ENCODE measurements at regions of chr10 and their contacts with region 1.

Region 1: GRCh38 chr10:14954001-14954770 is at the start of gene DCLRE1C:
- DNase-seq: peak; percentile 94 to 95 (median 94)
- ATAC-seq: peak; percentile 98
- H3K4me3 ChIP-seq: peak within 1 kb of the TSS; percentile 74
- H3K27ac ChIP-seq: peak within 1 kb of the TSS; percentile 74
- H3K4me1 ChIP-seq: peaks cover 15 to 21% of the 10 kb centered on the region in 2 experiments; a peak in 4 of 5 replicates
- H3K27me3 ChIP-seq: no peaks in the 10 kb centered on the region
- CTCF ChIP-seq: no peak
- EP300 ChIP-seq: no peak
- POLR2A ChIP-seq: peak; percentile 97
- RAD21 ChIP-seq: no peak
- polyA plus RNA-seq, gene DCLRE1C: 15.6 to 22.0 TPM

Region 2: DNA sequence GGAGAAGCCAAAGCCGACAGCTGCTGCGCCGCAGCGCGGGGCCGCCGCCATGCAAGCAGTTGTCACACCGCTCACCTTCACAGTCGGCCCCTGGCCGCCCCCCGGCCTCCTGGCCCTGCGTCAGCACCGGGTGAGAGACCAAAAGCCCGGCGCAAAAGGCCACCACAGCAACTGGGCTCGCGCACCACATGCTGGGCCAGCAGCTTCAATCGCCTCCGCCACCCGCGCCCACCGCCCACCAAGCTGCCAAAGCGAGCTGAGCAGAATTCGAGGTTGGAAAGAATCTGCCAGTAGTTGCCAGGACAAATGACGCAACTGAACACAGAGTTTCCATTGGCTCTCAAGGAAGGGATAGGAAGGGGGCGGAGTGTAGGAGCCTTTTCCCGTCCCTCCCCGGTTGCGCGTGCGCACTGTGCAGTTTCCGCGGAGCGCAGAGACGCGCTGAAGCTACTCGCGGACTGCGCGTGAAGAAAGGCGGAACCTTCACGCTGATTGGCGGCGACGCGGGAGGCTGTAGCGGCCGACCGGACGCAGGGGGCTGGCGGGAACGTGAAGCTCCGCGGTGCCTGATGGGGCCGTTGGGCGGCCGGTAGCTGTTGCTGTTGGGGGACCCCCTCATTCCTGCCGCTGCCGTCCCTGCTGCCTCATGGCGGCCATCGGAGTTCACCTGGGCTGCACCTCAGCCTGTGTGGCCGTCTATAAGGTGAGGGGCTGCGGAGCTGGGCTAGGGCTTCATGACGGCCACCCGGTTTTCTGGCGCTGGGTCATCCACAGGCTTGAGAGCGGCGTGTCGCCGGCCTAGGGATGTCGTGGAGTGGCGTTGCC is 116.2 kb before region 1 on chr10 and contains the starts of genes CDNF, HSPA14 and MSANTD7:
- CTCF ChIA-PET with region 1: no interaction called
- POLR2A ChIA-PET with region 1: interaction called, 3 read pairs
- in situ Hi-C with region 1: no loop called
- intact Hi-C with region 1: loop called (anchors 5 kb)
- DNase-seq: peak; percentile 94 to 99 (median 96)
- ATAC-seq: peak; percentile 97
- H3K4me3 ChIP-seq: peak within 1 kb of the TSS; percentile 99
- H3K27ac ChIP-seq: peak within 1 kb of the TSS; percentile 96
- H3K4me1 ChIP-seq: peaks cover 3 to 13% of the 10 kb centered on the region in 2 experiments; a peak in 2 of 5 replicates
- H3K27me3 ChIP-seq: no peaks in the 10 kb centered on the region
- CTCF ChIP-seq: no peak
- EP300 ChIP-seq: no peak
- POLR2A ChIP-seq: peak; percentile 96
- RAD21 ChIP-seq: no peak
- polyA plus RNA-seq, gene CDNF: 0.18 to 0.37 TPM
- polyA plus RNA-seq, gene HSPA14: 70.1 to 75.0 TPM
- polyA plus RNA-seq, gene MSANTD7: 5.2 to 7.1 TPM

Region 3: GRCh38 chr10:14995964-14996565 is 41.9 kb after region 1 on chr10:
- CTCF ChIA-PET with region 1: no interaction called
- POLR2A ChIA-PET with region 1: no interaction called
- in situ Hi-C with region 1: no loop called
- intact Hi-C with region 1: no loop called
- DNase-seq: no peak
- ATAC-seq: no peak
- H3K4me3 ChIP-seq: no peak overlapping the region
- H3K27ac ChIP-seq: no peak overlapping the region
- H3K4me1 ChIP-seq: no peaks in the 10 kb centered on the region
- H3K27me3 ChIP-seq: peaks cover 0 to 2% of the 10 kb centered on the region in 2 experiments; a peak in 2 of 5 replicates
- CTCF ChIP-seq: no peak
- EP300 ChIP-seq: no peak
- POLR2A ChIP-seq: no peak
- RAD21 ChIP-seq: no peak

Measured in K562 (cell line).